Gastrocnemius medialis (tissue), 4 donors: ENCODE measurements at regions of chr1 and their contacts with region 1.

Region 1: GRCh38 chr1:41919764-41920397 is 1.2 kb upstream of the HIVEP3 start:
- DNase-seq: peak; percentile 63 to 86
- ATAC-seq: peak; percentile 74 to 79
- H3K4me3 ChIP-seq: peak overlapping the region; percentile 53 to 70 (median 55)
- H3K27ac ChIP-seq: peak overlapping the region; percentile 81 to 84 (median 83)
- H3K4me1 ChIP-seq: peaks cover 37% of the 10 kb centered on the region in 2 donors
- H3K27me3 ChIP-seq: no peaks in the 10 kb centered on the region
- CTCF ChIP-seq: no peak
- POLR2A ChIP-seq: peak; percentile 69 to 80

Region 2: GRCh38 chr1:41812051-41812450 is 107.8 kb before region 1 on chr1:
- in situ Hi-C with region 1: no loop called
- intact Hi-C with region 1: loop called (anchors 2 kb)
- DNase-seq: peak in 1 of 2 donors; percentile 60
- ATAC-seq: peak in 1 of 2 donors; percentile 36
- H3K4me3 ChIP-seq: no peak overlapping the region
- H3K27ac ChIP-seq: peak overlapping the region; percentile 50 to 79 (median 75)
- H3K4me1 ChIP-seq: peaks cover 40 to 44% of the 10 kb centered on the region in 2 donors
- H3K27me3 ChIP-seq: no peaks in the 10 kb centered on the region
- CTCF ChIP-seq: peak; percentile 42 to 68 (median 57)
- POLR2A ChIP-seq: no peak

Region 3: DNA sequence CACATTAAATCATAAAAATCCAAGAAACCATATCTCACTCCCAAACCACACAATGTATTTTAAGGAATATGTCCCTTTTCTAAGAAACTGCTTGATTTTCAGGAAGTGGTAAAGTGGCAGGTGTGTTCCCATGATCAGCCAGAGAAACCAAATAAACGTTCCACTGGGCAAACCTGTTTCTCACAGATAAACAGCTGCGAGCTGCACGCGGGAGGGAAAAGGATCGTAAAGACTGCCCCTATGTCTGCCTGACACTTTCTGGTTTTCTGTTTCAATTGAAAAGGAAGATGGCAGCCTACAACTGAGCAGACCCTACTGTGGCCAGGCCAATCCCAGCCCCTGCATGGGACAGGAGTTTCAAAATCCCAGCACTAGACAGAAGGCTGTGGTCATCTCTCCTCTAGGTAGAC is 37.8 kb before region 1 on chr1:
- in situ Hi-C with region 1: no loop called
- intact Hi-C with region 1: loop called (anchors 2 kb)
- DNase-seq: no peak
- ATAC-seq: peak; percentile 41 to 42
- H3K4me3 ChIP-seq: peak overlapping the region in 2 of 4 donors; percentile 6 to 20
- H3K27ac ChIP-seq: peak overlapping the region; percentile 78 to 83 (median 80)
- H3K4me1 ChIP-seq: peaks cover 53% of the 10 kb centered on the region in 2 donors
- H3K27me3 ChIP-seq: no peaks in the 10 kb centered on the region
- CTCF ChIP-seq: no peak
- POLR2A ChIP-seq: no peak